ENCODE measurements at regions of chr17 and their contacts with region 1.

Region 1: DNA sequence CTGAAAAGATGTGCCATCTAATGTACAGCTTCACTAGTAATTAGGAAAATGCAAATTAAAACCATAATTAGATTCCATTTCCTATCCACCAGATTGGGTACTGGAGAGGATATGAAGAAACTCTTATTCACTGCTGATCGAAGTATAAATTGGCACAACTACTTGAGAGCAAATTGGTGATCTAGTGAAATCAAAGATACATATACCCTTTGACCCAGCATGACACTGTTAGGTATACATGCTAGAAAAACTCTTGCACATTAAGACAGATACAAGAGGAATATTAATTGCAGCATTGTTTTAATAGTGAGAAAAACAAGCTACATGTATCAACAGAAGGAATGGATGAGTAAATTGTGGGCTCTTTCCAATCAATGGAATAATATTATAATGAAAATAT is 48.8 kb downstream of the BRIP1 start:
- DNase-seq: no peak
- H3K4me3 ChIP-seq: no peak overlapping the region
- H3K27ac ChIP-seq: no peak overlapping the region
- H3K4me1 ChIP-seq: 0 out of 2 replicates have a peak, but pooled peaks cover 7% of the 10 kb centered on the region
- H3K27me3 ChIP-seq: no peaks in the 10 kb centered on the region
- CTCF ChIP-seq: no peak

Region 2: DNA sequence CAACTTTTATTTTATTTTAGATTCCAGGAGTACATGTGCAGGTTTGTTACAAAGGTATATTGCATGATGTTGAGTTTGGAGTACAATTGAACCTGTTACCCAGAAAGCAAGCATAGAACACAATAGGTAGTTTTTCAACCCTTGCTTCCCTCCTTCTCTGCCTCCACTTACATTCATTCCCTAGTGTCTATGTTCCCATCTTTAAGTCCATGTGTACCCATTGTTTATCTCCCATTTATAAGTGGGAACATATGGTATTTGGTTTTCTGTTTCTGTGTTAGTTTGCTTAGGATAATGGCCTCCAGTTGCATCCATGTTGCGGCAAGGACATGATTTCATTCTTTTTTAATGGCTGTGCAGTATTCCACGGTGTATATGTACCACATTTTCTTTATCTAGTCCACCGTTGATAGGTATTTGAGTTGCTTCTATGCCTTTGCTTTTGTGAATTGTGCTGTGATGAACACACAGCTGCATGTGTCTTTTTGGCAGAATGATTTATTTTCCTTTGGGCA is 109.5 kb before region 1 on chr17:
- CTCF ChIA-PET with region 1: no interaction called
- POLR2A ChIA-PET with region 1: interaction called, 10 read pairs
- intact Hi-C with region 1: no loop called
- DNase-seq: no peak
- H3K4me3 ChIP-seq: no peak overlapping the region
- H3K27ac ChIP-seq: no peak overlapping the region
- H3K4me1 ChIP-seq: no peaks in the 10 kb centered on the region
- H3K27me3 ChIP-seq: no peaks in the 10 kb centered on the region
- CTCF ChIP-seq: no peak

Region 3: GRCh38 chr17:61737820-61738219 is 76.7 kb before region 1 on chr17:
- CTCF ChIA-PET with region 1: no interaction called
- POLR2A ChIA-PET with region 1: no interaction called
- intact Hi-C with region 1: no loop called
- DNase-seq: no peak
- H3K4me3 ChIP-seq: no peak overlapping the region
- H3K27ac ChIP-seq: no peak overlapping the region
- H3K4me1 ChIP-seq: no peaks in the 10 kb centered on the region
- H3K27me3 ChIP-seq: no peaks in the 10 kb centered on the region
- CTCF ChIP-seq: no peak

Region 4: DNA sequence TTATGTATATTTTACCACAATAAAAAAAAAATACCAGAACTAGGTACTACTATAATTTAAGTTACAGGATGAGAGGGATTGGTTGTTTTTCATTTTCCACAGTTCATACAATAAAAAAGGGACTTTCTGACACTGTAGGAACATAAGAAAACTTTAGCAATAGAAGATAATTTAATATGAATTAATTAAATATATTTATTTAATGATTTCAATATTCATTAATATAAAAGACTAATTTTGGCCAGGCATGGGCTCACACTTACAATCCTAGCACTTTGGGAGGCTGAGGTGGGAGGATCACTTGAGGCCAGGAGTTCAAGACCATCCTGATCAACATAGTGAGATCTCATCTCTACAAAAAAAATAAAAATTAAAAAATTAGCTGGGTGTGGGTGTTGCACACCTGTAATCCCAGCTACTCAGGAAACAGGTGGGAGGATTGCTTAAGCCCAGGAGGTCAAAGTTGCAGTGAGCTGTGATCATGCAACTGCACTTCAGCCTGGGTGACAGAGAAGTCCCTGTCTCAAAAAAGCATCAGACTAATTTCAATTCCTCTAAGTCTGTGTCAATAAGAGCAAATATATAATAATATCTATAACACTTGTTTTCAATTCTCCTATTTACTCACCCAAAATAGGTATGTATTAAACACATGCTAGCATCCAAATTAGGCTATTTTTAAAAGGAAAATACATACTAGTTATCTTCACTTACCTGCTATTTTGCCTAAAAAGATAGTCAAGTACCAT is 30.8 kb before region 1 on chr17:
- CTCF ChIA-PET with region 1: no interaction called
- POLR2A ChIA-PET with region 1: interaction called, 16 read pairs
- intact Hi-C with region 1: no loop called
- DNase-seq: no peak
- H3K4me3 ChIP-seq: no peak overlapping the region
- H3K27ac ChIP-seq: no peak overlapping the region
- H3K4me1 ChIP-seq: no peaks in the 10 kb centered on the region
- H3K27me3 ChIP-seq: no peaks in the 10 kb centered on the region
- CTCF ChIP-seq: no peak

Measured in PC-9 (cell line).